ENCODE measurements at regions of chr9 and their contacts with region 1.

Region 1: DNA sequence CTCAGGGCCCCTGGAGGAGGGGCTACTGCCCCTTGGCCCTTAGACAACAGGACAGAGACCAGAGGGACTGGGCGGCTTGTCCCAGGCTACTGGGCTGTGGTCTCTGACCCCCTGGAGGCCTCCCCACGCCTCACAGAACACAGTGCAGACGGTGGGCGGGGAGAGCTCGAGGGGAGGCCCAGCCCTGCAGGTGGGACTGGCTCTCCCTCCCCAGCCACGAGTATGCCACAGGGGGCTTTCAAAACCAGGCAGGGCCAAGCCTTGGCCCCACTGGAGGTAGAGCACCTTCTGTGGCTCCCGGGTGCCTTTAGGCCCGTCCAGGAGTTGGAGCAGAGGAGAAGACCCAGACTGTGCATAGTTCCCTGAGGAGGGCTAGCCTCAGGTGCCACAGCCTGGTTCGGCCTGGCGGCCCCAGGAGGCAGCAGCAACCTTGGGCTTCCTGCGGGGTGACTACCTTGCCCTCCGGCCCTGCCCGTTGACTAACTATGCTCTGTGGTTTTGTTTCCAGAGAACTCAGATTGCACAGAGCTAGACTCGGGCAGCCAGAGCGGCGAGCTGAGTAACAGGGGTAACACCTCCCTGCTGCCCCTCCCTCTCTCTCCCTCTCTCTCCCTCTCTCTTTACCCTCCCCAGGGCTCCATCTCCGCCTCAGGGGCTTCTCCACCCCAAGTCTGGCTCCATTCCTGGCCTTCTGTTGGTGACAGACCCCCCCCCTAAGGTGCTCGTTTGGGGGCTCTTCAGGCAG is 15.5 kb downstream of the CARD19 start:
- DNase-seq: peak; percentile 96 to 97
- H3K4me3 ChIP-seq: peak overlapping the region; percentile 9; the same call in 1 of the 2 replicates
- H3K27ac ChIP-seq: peak overlapping the region; percentile 97
- H3K4me1 ChIP-seq: peaks cover 82% of the 10 kb centered on the region
- H3K27me3 ChIP-seq: no peaks in the 10 kb centered on the region
- CTCF ChIP-seq: no peak

Region 2: DNA sequence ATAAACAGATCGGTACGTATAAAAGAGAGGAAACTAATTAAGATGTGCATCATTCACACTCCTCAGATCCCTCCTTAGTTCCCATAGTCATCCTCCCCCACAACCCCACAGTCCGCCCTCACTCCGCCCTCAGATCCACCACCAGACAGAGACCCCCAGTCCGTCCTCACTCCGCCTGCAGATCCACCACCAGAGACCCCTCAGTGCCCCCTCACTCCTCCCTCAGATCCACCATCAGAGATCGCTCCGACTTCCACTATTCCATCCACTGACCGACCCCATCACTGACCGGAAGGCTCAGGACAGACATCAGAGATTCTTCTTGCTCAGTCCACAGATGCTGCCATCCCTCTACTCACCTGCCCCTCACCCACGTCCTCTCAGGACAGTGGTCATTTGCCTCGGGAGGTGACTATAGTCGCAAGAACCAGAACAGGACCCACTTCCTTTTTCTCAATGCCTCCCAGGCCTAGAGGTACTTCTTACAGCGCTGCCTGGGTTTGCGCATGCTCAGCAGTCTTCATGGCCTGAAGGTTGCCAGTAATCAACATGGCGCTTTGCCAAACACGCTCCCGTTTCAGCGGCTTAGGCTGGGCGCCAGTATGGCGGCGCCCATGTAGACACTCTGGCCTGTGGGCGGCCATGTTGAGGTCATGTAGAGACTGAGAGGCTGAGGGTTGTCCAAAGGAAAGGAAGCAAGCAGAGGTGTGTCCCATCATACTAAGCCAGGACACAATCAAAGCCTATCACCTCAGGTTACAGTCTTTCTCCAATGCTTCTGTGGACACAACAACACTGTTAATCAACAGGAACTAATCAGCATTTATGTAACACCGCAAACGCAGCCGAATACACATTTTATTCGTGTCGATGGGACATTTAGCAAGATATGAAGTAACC is 233.8 kb before region 1 on chr9 and contains the start of gene ZNF484:
- CTCF ChIA-PET with region 1: no interaction called
- POLR2A ChIA-PET with region 1: interaction called, 11 read pairs
- intact Hi-C with region 1: no loop called
- DNase-seq: peak; percentile 94 to 99
- H3K4me3 ChIP-seq: peak within 1 kb of the TSS; percentile 68
- H3K27ac ChIP-seq: peak within 1 kb of the TSS; percentile 72
- H3K4me1 ChIP-seq: peaks cover 28% of the 10 kb centered on the region
- H3K27me3 ChIP-seq: no peaks in the 10 kb centered on the region
- CTCF ChIP-seq: no peak
- total RNA-seq, gene ZNF484: 8.4 and 10.8 TPM in 2 replicates

Region 3: DNA sequence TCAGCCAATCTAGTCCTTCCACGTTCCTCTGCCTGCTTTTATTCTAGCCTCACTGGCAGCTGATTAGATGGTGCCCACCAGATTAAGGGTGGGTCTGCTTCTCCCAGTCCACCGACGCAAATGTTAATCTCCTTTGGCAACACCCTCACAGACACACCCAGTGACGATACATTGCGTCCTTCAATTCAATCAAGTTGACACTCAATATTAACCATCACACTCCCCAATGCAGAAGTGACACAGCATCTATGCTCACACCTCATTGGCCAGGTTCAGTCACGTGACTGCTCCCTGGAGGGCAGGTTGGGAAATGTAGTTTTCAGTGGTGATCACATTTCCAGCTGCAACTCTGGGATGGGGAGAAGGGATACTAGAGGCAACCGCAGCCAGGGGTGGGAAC is 40.1 kb before region 1 on chr9:
- CTCF ChIA-PET with region 1: no interaction called
- POLR2A ChIA-PET with region 1: no interaction called
- intact Hi-C with region 1: no loop called
- DNase-seq: no peak
- H3K4me3 ChIP-seq: no peak overlapping the region
- H3K27ac ChIP-seq: no peak overlapping the region
- H3K4me1 ChIP-seq: no peaks in the 10 kb centered on the region
- H3K27me3 ChIP-seq: no peaks in the 10 kb centered on the region
- CTCF ChIP-seq: no peak

Region 4: GRCh38 chr9:93154315-93154903 is 42.9 kb after region 1 on chr9:
- CTCF ChIA-PET with region 1: interaction called, 5 read pairs
- POLR2A ChIA-PET with region 1: interaction called, 3 read pairs
- intact Hi-C with region 1: loop called (anchors 2 kb)
- DNase-seq: peak in 1 of 2 experiments; percentile 60
- H3K4me3 ChIP-seq: no peak overlapping the region
- H3K27ac ChIP-seq: no peak overlapping the region
- H3K4me1 ChIP-seq: no peaks in the 10 kb centered on the region; the same call in 1 of the 2 replicates
- H3K27me3 ChIP-seq: no peaks in the 10 kb centered on the region
- CTCF ChIP-seq: peak; percentile 86

Region 5: DNA sequence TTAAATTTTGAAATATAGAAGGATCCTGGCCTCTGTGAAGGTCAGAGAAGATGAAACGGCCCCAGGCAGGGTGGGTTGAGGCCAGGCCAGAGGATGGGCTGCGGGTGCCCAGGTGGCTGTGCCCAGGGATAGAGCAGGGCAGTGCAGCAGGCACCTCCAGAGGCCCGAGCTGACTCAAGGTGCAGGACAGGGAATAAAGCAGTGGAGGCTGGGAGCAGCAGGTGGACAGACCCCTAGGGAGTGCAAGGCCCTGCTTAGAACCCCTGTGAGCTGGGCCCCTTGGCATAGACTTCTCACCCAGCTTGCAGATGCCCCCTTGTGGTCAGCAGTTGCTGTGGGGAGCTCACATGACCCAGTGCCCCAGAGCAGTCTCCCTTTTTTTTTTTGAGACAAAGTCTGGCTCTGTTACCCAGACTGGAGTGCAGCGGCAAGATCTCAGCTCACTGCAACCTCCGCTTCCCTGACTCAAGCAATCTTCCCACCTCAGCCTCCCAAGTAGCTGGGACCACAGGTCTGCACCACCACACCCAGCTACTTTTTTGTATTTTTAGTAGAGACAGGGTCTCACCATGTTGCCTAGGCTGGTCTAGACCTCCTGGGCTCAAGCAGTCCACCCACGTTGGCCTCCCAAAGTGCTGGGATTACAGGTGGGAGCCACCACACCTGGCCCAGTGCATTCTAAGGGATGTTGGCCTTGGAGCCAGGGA is 191.2 kb after region 1 on chr9:
- CTCF ChIA-PET with region 1: interaction called, 8 read pairs
- POLR2A ChIA-PET with region 1: interaction called, 6 read pairs
- intact Hi-C with region 1: loop called (anchors 1 kb)
- DNase-seq: peak; percentile 61 to 77
- H3K4me3 ChIP-seq: no peak overlapping the region
- H3K27ac ChIP-seq: no peak overlapping the region
- H3K4me1 ChIP-seq: no peaks in the 10 kb centered on the region
- H3K27me3 ChIP-seq: no peaks in the 10 kb centered on the region
- CTCF ChIP-seq: peak; percentile 84

Region 6: GRCh38 chr9:93962561-93963440 is 851.3 kb after region 1 on chr9:
- CTCF ChIA-PET with region 1: no interaction called
- POLR2A ChIA-PET with region 1: no interaction called
- intact Hi-C with region 1: loop called (anchors 2 kb)
- DNase-seq: peak; percentile 48 to 74
- H3K4me3 ChIP-seq: no peak overlapping the region
- H3K27ac ChIP-seq: no peak overlapping the region
- H3K4me1 ChIP-seq: no peaks in the 10 kb centered on the region
- H3K27me3 ChIP-seq: 0 out of 2 replicates have a peak, but pooled peaks cover 2% of the 10 kb centered on the region
- CTCF ChIP-seq: peak; percentile 88

Measured in PC-9 (cell line).